Left cardiac atrium (tissue), 4 donors: ENCODE measurements at regions of chr2 and their contacts with region 1.

Region 1: GRCh38 chr2:148644883-148645538 is 460 bp downstream of the EPC2 start:
- DNase-seq: peak; percentile 95
- ATAC-seq: peak; percentile 88 to 91

Region 2: GRCh38 chr2:148020111-148021058 is 624.6 kb before region 1 on chr2 and contains the start of gene ORC4:
- intact Hi-C with region 1: loop called in 1 of 2 experiments (anchors 10 kb)
- DNase-seq: peak; percentile 99
- ATAC-seq: peak; percentile 98 to 99
- total RNA-seq, gene ORC4: 39.5 TPM

Region 3: DNA sequence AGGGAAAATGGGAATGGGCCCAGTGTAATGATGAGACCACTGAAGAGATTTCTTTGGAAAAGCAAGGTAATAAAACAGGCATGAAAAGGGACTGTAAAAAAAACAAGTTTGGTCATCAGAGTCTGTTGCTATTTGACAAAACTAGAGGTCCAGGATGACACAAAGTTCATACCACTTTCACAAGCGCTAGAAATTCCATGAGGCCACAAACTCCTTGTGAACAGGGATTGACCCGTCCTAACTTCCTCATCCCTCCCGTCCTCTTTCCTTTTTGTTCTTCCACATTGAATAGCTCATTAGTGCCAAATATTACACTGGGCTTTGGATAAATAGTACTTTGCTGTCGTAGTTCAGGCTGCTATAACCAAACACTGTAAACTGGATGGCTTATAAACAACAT is 189.2 kb before region 1 on chr2:
- intact Hi-C with region 1: no loop called
- DNase-seq: no peak
- ATAC-seq: no peak